ENCODE measurements at regions of chr1 and their contacts with region 1.

Region 1: DNA sequence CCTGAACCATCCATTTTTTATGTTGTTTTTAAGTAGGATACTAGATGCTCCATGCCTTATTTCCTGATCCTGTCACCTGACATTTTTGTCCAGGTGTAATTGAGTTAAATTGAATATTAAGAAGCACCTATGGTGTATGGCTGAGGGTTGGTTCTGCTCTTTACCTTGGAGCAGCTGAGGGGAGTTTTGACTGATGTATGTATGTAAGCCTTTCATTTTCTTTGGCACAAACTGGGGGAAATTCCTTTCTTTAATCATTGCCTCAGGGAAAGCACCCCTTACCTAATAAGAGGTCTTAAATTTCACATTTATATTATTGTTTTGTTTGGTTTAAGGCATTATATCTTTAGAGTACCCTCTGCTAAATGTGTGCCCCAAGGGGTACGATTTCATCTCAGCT is 57.9 kb upstream of the NUF2 start:
- DNase-seq: peak; percentile 3
- H3K4me3 Mint-ChIP-seq: no peak overlapping the region
- H3K27ac Mint-ChIP-seq: no peak overlapping the region
- H3K4me1 Mint-ChIP-seq: peaks cover 8% of the 10 kb centered on the region
- H3K27me3 Mint-ChIP-seq: no peaks in the 10 kb centered on the region
- CTCF ChIP-seq: no peak

Region 2: DNA sequence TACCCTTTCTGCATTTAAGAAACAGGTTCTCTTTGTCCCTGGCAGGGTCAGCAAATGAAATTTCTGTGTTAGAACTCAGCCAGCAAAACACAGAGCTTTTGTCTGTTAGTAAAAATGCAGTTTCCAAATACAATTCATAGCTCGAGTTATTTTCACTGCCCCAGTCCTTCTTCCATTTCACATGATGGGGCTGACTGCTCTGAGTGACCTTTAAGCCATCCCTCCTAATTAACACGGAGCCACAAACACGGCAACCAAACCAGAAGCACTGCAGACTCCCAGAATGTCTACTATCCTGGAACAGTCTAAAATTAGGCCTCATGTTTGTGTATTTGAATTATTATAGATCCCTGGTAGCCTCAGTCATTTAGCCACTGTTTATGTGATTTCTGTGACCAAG is 293.8 kb before region 1 on chr1:
- CTCF ChIA-PET with region 1: no interaction called
- intact Hi-C with region 1: no loop called
- DNase-seq: no peak
- H3K4me3 Mint-ChIP-seq: no peak overlapping the region
- H3K27ac Mint-ChIP-seq: no peak overlapping the region
- H3K4me1 Mint-ChIP-seq: no peaks in the 10 kb centered on the region
- H3K27me3 Mint-ChIP-seq: no peaks in the 10 kb centered on the region
- CTCF ChIP-seq: no peak

Region 3: GRCh38 chr1:163120372-163120771 is 143.4 kb before region 1 on chr1:
- CTCF ChIA-PET with region 1: no interaction called
- intact Hi-C with region 1: no loop called
- DNase-seq: no peak
- H3K4me3 Mint-ChIP-seq: no peak overlapping the region
- H3K27ac Mint-ChIP-seq: no peak overlapping the region
- H3K4me1 Mint-ChIP-seq: no peaks in the 10 kb centered on the region
- H3K27me3 Mint-ChIP-seq: no peaks in the 10 kb centered on the region
- CTCF ChIP-seq: no peak

Region 4: GRCh38 chr1:163195728-163196448 is 67.9 kb before region 1 on chr1:
- CTCF ChIA-PET with region 1: no interaction called
- intact Hi-C with region 1: loop called (anchors 5 kb)
- DNase-seq: peak; percentile 12
- H3K4me3 Mint-ChIP-seq: no peak overlapping the region
- H3K27ac Mint-ChIP-seq: no peak overlapping the region
- H3K4me1 Mint-ChIP-seq: peaks cover 9% of the 10 kb centered on the region
- H3K27me3 Mint-ChIP-seq: no peaks in the 10 kb centered on the region
- CTCF ChIP-seq: no peak

Measured in Calu3 (cell line).